ENCODE measurements at regions of chr17 and their contacts with region 1.

Region 1: GRCh38 chr17:39621523-39622379 is 5.0 kb upstream of the PPP1R1B start:
- DNase-seq: peak; percentile 73
- ATAC-seq: peak; percentile 74
- H3K4me3 ChIP-seq: peak overlapping the region in 1 of 2 experiments; percentile 19; a peak in 1 of 4 replicates
- H3K27ac ChIP-seq: no peak overlapping the region
- H3K4me1 ChIP-seq: peaks cover 4% of the 10 kb centered on the region; the same call in 1 of the 2 replicates
- H3K27me3 ChIP-seq: no peaks in the 10 kb centered on the region
- CTCF ChIP-seq: peak; percentile 94

Region 2: DNA sequence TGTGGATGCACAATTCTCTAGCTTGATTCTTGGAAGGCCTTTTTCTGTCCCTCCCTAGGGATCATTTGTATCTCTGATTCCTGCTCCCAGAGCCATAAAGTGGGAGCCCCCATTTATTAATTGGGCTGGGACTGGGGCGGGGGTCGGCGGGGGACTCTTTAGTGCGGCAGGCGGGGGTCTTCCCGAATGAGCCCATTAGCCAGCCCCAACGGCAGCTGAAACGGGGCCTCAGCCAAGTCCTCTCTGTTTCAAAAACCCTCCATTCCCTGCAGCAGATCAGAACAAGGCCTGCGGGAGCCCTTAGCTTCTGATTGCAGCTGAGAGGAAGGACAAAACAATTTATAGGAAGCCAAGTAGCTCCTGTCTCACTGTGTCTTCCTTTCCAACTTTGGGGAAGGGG is 81.1 kb before region 1 on chr17:
- CTCF ChIA-PET with region 1: interaction called, 16 read pairs
- POLR2A ChIA-PET with region 1: no interaction called
- in situ Hi-C with region 1: no loop called
- intact Hi-C with region 1: loop called (anchors 5 kb)
- DNase-seq: no peak
- ATAC-seq: no peak
- H3K4me3 ChIP-seq: no peak overlapping the region
- H3K27ac ChIP-seq: no peak overlapping the region
- H3K4me1 ChIP-seq: no peaks in the 10 kb centered on the region
- H3K27me3 ChIP-seq: no peaks in the 10 kb centered on the region
- CTCF ChIP-seq: no peak

Region 3: GRCh38 chr17:39547713-39548478 is 73.9 kb before region 1 on chr17:
- CTCF ChIA-PET with region 1: interaction called, 8 read pairs
- POLR2A ChIA-PET with region 1: no interaction called
- in situ Hi-C with region 1: no loop called
- intact Hi-C with region 1: loop called (anchors 5 kb)
- DNase-seq: peak; percentile 36
- ATAC-seq: peak; percentile 92
- H3K4me3 ChIP-seq: no peak overlapping the region
- H3K27ac ChIP-seq: no peak overlapping the region
- H3K4me1 ChIP-seq: no peaks in the 10 kb centered on the region
- H3K27me3 ChIP-seq: no peaks in the 10 kb centered on the region
- CTCF ChIP-seq: peak; percentile 86

Region 4: DNA sequence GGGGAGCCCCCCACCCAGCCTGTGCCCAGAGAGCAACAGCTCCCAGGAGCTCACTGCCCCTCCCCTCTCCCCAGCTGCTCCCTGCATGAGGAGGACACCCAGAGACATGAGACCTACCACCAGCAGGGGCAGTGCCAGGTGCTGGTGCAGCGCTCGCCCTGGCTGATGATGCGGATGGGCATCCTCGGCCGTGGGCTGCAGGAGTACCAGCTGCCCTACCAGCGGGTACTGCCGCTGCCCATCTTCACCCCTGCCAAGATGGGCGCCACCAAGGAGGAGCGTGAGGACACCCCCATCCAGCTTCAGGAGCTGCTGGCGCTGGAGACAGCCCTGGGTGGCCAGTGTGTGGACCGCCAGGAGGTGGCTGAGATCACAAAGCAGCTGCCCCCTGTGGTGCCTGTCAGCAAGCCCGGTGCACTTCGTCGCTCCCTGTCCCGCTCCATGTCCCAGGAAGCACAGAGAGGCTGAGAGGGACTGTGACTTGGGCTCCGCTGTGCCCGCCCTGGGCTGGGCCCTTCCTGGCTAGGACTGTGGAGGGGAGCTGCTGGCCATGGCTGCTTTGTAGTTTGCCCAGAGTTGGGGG is 44.0 kb after region 1 on chr17:
- CTCF ChIA-PET with region 1: interaction called, 11 read pairs
- POLR2A ChIA-PET with region 1: no interaction called
- in situ Hi-C with region 1: no loop called
- intact Hi-C with region 1: loop called (anchors 5 kb)
- DNase-seq: no peak
- ATAC-seq: peak; percentile 44
- H3K4me3 ChIP-seq: no peak overlapping the region
- H3K27ac ChIP-seq: peak overlapping the region; percentile 59; the same call in 1 of the 2 replicates
- H3K4me1 ChIP-seq: peaks cover 46% of the 10 kb centered on the region
- H3K27me3 ChIP-seq: no peaks in the 10 kb centered on the region
- CTCF ChIP-seq: no peak; the same call in 1 of the 2 replicates

Region 5: DNA sequence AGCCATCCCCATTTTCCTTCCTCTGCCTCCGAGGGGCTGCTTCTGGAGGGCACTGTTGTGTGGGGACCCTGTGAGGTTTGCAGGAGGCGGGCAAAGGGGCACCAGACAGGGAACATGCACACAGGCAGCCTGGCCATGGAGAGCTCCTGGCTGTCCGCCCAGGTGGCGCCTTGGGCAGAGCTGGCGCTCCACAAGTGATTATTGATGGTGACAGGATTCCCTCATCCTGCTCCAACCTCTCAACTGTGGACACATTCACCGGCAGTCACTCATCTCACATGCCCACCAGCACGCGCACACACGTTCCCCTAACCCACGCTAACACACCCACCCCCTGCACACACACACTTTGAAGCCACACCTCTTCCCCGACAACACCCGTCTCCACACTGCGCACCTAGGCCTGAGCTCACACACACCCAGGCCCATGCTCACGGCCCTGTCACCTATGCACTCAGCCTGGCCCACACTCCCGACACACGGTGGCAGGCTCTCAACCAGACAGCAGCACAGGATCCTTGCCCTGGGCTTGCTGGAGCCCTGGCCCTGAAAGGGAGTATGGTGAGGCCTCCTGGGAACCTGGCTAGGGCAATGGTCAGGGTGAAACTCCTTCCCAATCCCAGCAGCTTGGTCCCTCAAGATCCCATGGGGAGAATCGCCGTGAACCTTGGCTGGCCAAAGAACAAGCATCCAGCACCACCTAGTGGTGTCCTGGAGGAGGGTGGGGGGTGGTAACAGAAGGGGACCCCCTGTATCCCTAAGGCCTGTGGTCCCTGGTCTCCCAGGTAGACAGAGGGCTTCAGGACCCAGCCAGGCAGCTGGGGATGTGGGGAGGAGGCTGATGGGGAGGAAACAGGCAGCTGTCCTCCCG is 50.1 kb after region 1 on chr17:
- CTCF ChIA-PET with region 1: interaction called, 11 read pairs
- POLR2A ChIA-PET with region 1: no interaction called
- in situ Hi-C with region 1: no loop called
- intact Hi-C with region 1: loop called (anchors 5 kb)
- DNase-seq: no peak
- ATAC-seq: peak; percentile 56
- H3K4me3 ChIP-seq: no peak overlapping the region
- H3K27ac ChIP-seq: no peak overlapping the region
- H3K4me1 ChIP-seq: peaks cover 14% of the 10 kb centered on the region
- H3K27me3 ChIP-seq: no peaks in the 10 kb centered on the region
- CTCF ChIP-seq: peak; percentile 83

Region 6: DNA sequence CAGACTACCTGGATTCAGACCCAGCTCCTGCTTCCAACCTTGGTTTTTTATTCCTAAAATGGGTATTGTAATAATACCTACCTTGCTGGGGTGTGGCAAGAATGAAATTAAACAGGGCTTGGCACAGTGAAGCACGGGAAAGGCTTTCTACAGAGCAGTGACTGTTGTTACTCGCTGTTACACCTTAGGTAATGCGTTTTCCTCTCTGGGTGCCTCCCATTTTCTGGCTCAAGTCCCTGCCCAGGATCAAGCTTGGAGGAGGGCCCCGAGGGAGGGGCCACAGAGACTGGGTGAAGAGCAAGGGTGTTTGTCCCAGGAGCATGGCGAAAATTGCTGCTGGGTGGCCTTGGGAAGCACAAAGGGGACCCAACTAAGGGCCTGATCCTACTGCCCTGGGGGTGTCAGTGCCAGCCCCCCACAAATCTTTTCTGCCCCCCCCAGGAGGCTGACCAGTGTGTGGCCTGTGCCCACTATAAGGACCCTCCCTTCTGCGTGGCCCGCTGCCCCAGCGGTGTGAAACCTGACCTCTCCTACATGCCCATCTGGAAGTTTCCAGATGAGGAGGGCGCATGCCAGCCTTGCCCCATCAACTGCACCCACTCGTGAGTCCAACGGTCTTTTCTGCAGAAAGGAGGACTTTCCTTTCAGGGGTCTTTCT is 95.3 kb after region 1 on chr17:
- CTCF ChIA-PET with region 1: interaction called, 10 read pairs
- POLR2A ChIA-PET with region 1: no interaction called
- in situ Hi-C with region 1: no loop called
- intact Hi-C with region 1: no loop called
- DNase-seq: no peak
- ATAC-seq: peak; percentile 45; the same call in 1 of the 2 replicates
- H3K4me3 ChIP-seq: no peak overlapping the region
- H3K27ac ChIP-seq: no peak overlapping the region
- H3K4me1 ChIP-seq: no peaks in the 10 kb centered on the region
- H3K27me3 ChIP-seq: no peaks in the 10 kb centered on the region
- CTCF ChIP-seq: no peak

Region 7: DNA sequence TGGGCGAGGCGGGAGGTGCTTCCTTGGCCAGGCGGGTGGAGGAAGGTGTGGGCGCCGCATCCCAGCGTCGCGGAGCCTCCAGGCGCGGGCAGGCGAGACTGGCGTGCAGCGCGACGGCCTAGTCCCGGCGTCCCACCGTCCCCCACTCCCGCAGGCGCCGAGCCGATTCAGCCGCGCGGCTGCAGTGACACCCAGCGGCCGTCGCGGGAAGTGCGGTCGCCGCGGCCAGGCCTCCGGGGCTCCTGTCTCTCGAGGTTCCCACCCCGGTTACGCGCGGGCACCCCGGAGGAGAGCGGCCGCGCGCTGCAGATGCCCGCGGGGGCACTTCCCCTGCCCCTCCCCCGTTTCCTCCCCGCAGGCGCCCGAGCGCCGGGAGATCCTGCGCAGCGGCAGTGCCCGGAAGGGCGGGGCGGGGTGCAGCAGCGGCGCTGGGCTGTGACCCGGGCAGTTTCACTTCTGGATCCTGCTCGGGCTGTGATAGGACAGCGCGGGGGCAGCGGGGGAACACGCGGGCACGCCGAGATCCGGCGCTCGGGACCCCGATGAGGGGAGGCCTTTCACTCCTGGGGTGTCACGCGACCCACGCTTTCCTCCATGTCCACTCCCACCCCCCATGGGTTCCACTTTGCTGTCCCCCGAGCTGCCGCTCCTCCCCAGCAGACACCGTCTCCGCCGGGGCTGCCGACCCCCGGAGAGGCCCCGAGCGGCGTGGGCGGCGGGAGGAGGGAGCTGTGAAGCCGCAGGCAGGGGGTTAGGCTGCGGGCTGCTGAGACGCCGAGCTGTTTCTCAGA is 132.6 kb after region 1 on chr17:
- CTCF ChIA-PET with region 1: interaction called, 4 read pairs
- POLR2A ChIA-PET with region 1: no interaction called
- in situ Hi-C with region 1: no loop called
- intact Hi-C with region 1: loop called (anchors 5 kb)
- DNase-seq: peak; percentile 35
- ATAC-seq: peak; percentile 95
- H3K4me3 ChIP-seq: peak overlapping the region; percentile 58 to 68
- H3K27ac ChIP-seq: peak overlapping the region; percentile 80
- H3K4me1 ChIP-seq: peaks cover 9% of the 10 kb centered on the region; the same call in 1 of the 2 replicates
- H3K27me3 ChIP-seq: no peaks in the 10 kb centered on the region; the same call in 1 of the 2 replicates
- CTCF ChIP-seq: peak; percentile 97

Region 8: DNA sequence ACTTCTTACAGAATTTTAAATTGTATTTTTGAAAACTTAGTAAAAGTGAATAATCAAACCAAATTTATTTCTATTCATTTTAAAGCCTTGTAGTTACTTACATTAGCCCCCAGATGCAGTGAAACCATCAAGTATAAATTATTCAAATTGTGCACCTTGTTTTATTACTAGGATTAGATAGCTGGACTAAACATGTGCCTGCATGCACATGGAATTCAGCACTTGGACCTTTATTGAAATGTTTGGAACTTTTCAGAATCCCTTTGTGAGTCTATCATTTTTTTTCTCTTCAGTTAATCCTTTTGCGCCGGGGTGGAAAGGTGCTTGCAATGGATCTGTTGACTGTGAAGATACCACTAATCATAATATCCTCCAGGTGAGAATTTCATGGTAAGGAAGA is 251.0 kb after region 1 on chr17:
- CTCF ChIA-PET with region 1: no interaction called
- POLR2A ChIA-PET with region 1: no interaction called
- in situ Hi-C with region 1: no loop called
- intact Hi-C with region 1: no loop called
- DNase-seq: no peak
- ATAC-seq: no peak
- H3K4me3 ChIP-seq: no peak overlapping the region
- H3K27ac ChIP-seq: no peak overlapping the region
- H3K4me1 ChIP-seq: no peaks in the 10 kb centered on the region
- H3K27me3 ChIP-seq: peaks cover 7% of the 10 kb centered on the region; the same call in 1 of the 2 replicates
- CTCF ChIP-seq: no peak; the same call in 1 of the 2 replicates

Measured in Panc1 (cell line).